ENCODE measurements at regions of chr20 and their contacts with region 1.

Region 1: GRCh38 chr20:33791959-33792597 is 19.1 kb upstream of the CHMP4B start:
- DNase-seq: peak; percentile 55
- H3K4me3 Mint-ChIP-seq: no peak overlapping the region
- H3K27ac Mint-ChIP-seq: no peak overlapping the region
- H3K4me1 Mint-ChIP-seq: peaks cover 32% of the 10 kb centered on the region
- H3K27me3 Mint-ChIP-seq: no peaks in the 10 kb centered on the region

Region 2: GRCh38 chr20:33773412-33774089 is 18.5 kb before region 1 on chr20:
- CTCF ChIA-PET with region 1: interaction called, 14 read pairs
- POLR2A ChIA-PET with region 1: interaction called, 4 read pairs
- DNase-seq: no peak
- H3K4me3 Mint-ChIP-seq: no peak overlapping the region
- H3K27ac Mint-ChIP-seq: no peak overlapping the region
- H3K4me1 Mint-ChIP-seq: peaks cover 12% of the 10 kb centered on the region
- H3K27me3 Mint-ChIP-seq: no peaks in the 10 kb centered on the region

Region 3: DNA sequence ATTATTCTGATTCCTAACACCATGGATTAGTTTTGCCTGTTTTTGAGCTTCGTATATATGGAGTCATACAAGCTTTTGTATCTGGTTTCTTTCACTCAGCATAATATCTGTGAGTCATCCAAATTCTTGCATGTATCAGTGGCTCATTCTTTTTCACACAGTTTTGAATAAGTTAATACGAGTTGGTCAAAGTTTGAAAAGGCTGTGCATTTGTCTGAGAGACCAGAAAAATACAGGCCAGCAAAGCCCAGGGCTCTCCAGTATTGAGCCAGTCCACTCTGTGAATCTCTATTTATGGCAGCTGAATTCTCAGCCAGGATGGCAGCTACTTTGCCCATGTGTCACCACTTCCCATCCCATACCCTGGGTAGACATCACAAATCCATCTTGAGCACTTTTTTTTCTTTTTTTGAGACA is 11.9 kb after region 1 on chr20:
- CTCF ChIA-PET with region 1: interaction called, 10 read pairs
- POLR2A ChIA-PET with region 1: no interaction called
- DNase-seq: no peak
- H3K4me3 Mint-ChIP-seq: no peak overlapping the region
- H3K27ac Mint-ChIP-seq: no peak overlapping the region
- H3K4me1 Mint-ChIP-seq: no peaks in the 10 kb centered on the region
- H3K27me3 Mint-ChIP-seq: peaks cover 7% of the 10 kb centered on the region

Region 4: GRCh38 chr20:33810885-33811777 is 19.1 kb after region 1 on chr20 and contains the start of gene CHMP4B:
- CTCF ChIA-PET with region 1: interaction called, 33 read pairs
- POLR2A ChIA-PET with region 1: interaction called, 10 read pairs
- DNase-seq: peak; percentile 99
- H3K4me3 Mint-ChIP-seq: peak within 1 kb of the TSS; percentile 96
- H3K27ac Mint-ChIP-seq: peak within 1 kb of the TSS; percentile 88
- H3K4me1 Mint-ChIP-seq: peaks cover 33% of the 10 kb centered on the region
- H3K27me3 Mint-ChIP-seq: no peaks in the 10 kb centered on the region
- total RNA-seq, gene CHMP4B: 86.7 to 86.9 TPM

Measured in activated CD4-positive, alpha-beta memory T cell treated with anti-CD3 and anti-CD28 coated beads, Interleukin-2, amount 10 ng/mL, durations not matched to agents 7 days and 5 days (primary cell).